ENCODE measurements at regions of chr2 and their contacts with region 1.

Region 1: DNA sequence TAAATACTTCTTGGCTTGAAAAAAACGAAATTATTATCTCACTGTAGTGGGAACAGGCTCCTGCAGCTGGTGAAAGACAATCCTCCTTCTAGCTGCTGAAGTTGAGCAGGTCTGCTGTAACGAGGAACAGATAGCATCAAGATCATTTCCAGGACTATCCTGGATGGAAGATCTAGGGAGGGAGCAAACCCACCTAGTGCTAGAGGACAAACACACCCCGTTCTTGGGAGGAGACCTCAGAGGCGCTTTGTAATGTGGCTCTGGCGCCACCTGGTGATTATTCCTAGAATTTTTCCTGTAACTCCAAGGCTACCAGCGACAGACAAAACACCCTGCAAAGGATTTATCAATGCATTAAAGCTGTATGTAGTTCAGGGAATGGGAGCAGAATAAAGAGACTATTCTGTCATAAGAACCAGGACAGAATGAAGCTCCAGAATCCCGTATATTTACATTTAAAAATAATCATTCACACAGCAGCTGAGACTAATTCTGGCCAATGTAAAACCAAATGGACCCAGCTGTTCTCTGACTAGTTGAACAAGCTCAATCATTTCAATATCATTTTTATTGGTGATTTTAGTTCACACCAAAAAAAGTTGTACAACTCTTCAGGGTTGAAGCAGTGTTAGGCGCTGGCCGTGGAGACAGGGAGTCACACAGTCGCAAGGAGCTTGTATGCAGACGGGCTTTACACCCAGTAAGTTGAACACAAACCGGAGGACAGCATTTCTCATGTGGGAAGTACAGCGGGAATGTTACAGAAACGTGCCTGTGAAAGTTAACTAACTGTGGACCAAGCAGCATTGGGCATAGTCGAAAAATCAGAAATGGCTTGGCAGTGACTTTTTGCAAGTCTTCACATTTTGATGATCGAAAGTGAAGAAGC is 290.3 kb downstream of the TRIB2 start:
- DNase-seq: peak; percentile 77
- ATAC-seq: peak; percentile 49
- H3K4me3 ChIP-seq: no peak overlapping the region
- H3K4me3 Mint-ChIP-seq: no peak overlapping the region
- H3K27ac ChIP-seq: no peak overlapping the region
- H3K27ac Mint-ChIP-seq: no peak overlapping the region
- H3K4me1 ChIP-seq: peaks cover 0 to 3% of the 10 kb centered on the region in 2 donors
- H3K4me1 Mint-ChIP-seq: peaks cover 2% of the 10 kb centered on the region
- H3K27me3 ChIP-seq: no peaks in the 10 kb centered on the region
- H3K27me3 Mint-ChIP-seq: peaks cover 21% of the 10 kb centered on the region
- CTCF ChIP-seq: peak; percentile 96

Region 2: DNA sequence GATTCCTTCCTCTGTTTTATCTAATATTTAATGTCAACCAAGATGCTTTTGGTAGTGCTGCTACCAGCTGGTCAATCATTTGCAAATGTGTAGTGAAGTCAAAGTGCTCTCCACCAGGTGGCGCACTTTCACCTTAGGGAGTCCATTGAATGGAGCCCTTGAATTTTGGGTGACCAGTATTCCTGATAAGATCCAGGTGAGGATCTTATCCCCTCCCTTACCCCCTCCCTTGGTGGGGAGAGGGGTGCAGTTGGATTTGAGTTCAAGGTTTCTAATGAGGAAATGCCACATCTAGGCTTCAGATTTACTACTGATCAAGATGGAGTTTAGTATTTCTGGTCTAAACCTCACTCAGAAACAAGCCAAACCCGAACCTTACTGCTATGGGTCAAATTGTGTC is 1529.1 kb before region 1 on chr2:
- CTCF ChIA-PET with region 1: interaction called, 14 read pairs
- POLR2A ChIA-PET with region 1: no interaction called
- intact Hi-C with region 1: no loop called
- DNase-seq: peak; percentile 82
- ATAC-seq: peak; percentile 54
- H3K4me3 ChIP-seq: no peak overlapping the region
- H3K4me3 Mint-ChIP-seq: no peak overlapping the region
- H3K27ac ChIP-seq: no peak overlapping the region
- H3K27ac Mint-ChIP-seq: no peak overlapping the region
- H3K4me1 ChIP-seq: peaks cover 2 to 10% of the 10 kb centered on the region in 2 donors
- H3K4me1 Mint-ChIP-seq: peaks cover 3% of the 10 kb centered on the region
- H3K27me3 ChIP-seq: peaks cover 0 to 31% (median 5%) of the 10 kb centered on the region in 4 experiments
- H3K27me3 Mint-ChIP-seq: peaks cover 27% of the 10 kb centered on the region
- CTCF ChIP-seq: peak; percentile 97

Region 3: GRCh38 chr2:11829947-11830707 is 1176.9 kb before region 1 on chr2:
- CTCF ChIA-PET with region 1: interaction called, 95 read pairs
- POLR2A ChIA-PET with region 1: no interaction called
- intact Hi-C with region 1: no loop called
- DNase-seq: peak; percentile 58
- ATAC-seq: peak; percentile 59
- H3K4me3 ChIP-seq: peak overlapping the region in 4 of 5 experiments; percentile 3 to 34 (median 20)
- H3K4me3 Mint-ChIP-seq: peak overlapping the region; percentile 83
- H3K27ac ChIP-seq: peak overlapping the region; percentile 40 to 64
- H3K27ac Mint-ChIP-seq: peak overlapping the region; percentile 78
- H3K4me1 ChIP-seq: peaks cover 42 to 63% of the 10 kb centered on the region in 2 donors
- H3K4me1 Mint-ChIP-seq: peaks cover 61% of the 10 kb centered on the region
- H3K27me3 ChIP-seq: no peaks in the 10 kb centered on the region
- H3K27me3 Mint-ChIP-seq: no peaks in the 10 kb centered on the region
- CTCF ChIP-seq: no peak

Region 4: DNA sequence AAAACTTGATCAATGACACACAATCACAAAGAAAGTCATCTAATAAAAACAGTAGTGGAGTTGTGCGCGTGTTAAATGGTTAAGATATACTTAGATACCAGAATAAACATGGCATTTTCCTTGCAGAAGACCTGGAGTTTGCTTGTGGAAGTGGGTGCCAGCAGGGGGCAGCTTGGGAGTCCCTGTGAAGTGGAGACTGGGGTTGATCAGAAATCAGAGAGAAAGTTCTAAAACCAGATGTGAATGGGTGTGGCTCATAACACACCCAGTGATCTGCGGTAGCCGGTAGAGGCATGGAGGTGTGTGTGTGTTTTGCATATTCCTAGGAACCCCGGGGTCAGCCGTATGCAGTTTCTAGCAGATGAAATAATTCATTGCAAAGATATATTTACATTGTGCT is 590.5 kb before region 1 on chr2:
- CTCF ChIA-PET with region 1: no interaction called
- POLR2A ChIA-PET with region 1: no interaction called
- intact Hi-C with region 1: loop called (anchors 1 kb)
- DNase-seq: peak; percentile 65
- ATAC-seq: peak; percentile 64
- H3K4me3 ChIP-seq: no peak overlapping the region
- H3K4me3 Mint-ChIP-seq: peak overlapping the region; percentile 11
- H3K27ac ChIP-seq: no peak overlapping the region
- H3K27ac Mint-ChIP-seq: no peak overlapping the region
- H3K4me1 ChIP-seq: peaks cover 16 to 24% of the 10 kb centered on the region in 2 donors
- H3K4me1 Mint-ChIP-seq: peaks cover 34% of the 10 kb centered on the region
- H3K27me3 ChIP-seq: no peaks in the 10 kb centered on the region
- H3K27me3 Mint-ChIP-seq: no peaks in the 10 kb centered on the region
- CTCF ChIP-seq: no peak

Region 5: GRCh38 chr2:12649602-12650400 is 357.3 kb before region 1 on chr2:
- CTCF ChIA-PET with region 1: no interaction called
- POLR2A ChIA-PET with region 1: no interaction called
- intact Hi-C with region 1: no loop called
- DNase-seq: no peak
- ATAC-seq: no peak
- H3K4me3 ChIP-seq: no peak overlapping the region
- H3K4me3 Mint-ChIP-seq: no peak overlapping the region
- H3K27ac ChIP-seq: no peak overlapping the region
- H3K27ac Mint-ChIP-seq: no peak overlapping the region
- H3K4me1 ChIP-seq: no peaks in the 10 kb centered on the region
- H3K4me1 Mint-ChIP-seq: peaks cover 2% of the 10 kb centered on the region
- H3K27me3 ChIP-seq: peaks cover 0 to 20% (median 5%) of the 10 kb centered on the region in 4 experiments
- H3K27me3 Mint-ChIP-seq: peaks cover 29% of the 10 kb centered on the region
- CTCF ChIP-seq: no peak

Region 6: GRCh38 chr2:12990523-12990922 is 16.6 kb before region 1 on chr2:
- CTCF ChIA-PET with region 1: interaction called, 20 read pairs
- POLR2A ChIA-PET with region 1: no interaction called
- intact Hi-C with region 1: no loop called
- DNase-seq: no peak
- ATAC-seq: no peak
- H3K4me3 ChIP-seq: no peak overlapping the region
- H3K4me3 Mint-ChIP-seq: no peak overlapping the region
- H3K27ac ChIP-seq: no peak overlapping the region
- H3K27ac Mint-ChIP-seq: no peak overlapping the region
- H3K4me1 ChIP-seq: no peaks in the 10 kb centered on the region
- H3K4me1 Mint-ChIP-seq: no peaks in the 10 kb centered on the region
- H3K27me3 ChIP-seq: no peaks in the 10 kb centered on the region
- H3K27me3 Mint-ChIP-seq: peaks cover 17% of the 10 kb centered on the region
- CTCF ChIP-seq: peak; percentile 66

Measured in B cell (primary cell).